ENCODE measurements at regions of chr2 and their contacts with region 1.

Region 1: DNA sequence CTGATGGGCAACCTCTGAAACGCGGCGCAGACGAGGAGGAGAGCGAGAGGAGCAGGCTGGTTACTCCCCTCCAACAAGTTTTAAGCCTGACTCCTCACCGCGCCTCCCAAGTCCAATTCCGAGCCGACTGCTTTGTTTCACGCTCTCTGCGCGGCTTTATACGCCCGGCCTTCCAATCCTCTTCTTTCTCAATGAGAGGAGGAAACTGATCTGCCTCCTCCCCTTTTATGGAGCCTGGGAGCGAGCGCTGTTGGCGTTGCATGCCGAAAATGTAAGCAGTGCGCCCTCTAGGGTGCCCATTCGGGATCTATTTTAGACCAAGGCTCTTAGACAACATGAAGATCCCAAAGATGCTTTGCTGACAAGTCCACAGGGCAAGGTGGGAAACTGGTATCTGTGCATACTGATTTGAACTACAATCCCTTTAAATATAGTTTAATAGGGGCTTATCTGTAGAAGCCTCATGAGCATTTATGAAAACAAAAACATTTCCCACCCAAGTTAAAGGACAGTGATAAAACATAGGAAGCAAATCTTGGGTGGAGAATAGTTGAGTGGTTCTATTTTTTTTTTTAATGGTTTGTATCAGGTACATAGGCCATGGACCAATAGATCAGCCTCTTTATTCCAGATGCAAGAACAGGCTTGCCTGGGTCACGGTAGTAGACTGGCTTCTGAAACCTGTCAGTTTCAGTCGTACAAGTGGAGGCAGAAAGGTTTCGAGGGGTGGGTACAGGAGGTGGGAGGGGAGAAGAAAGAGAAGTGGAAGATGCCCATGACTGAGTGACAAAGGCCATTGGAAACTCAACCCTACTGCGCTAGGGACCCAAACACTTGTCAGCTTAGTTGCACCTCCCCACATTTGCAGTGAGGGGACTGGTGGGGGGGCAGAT is at the start of gene RND3:
- DNase-seq: peak; percentile 96
- H3K4me3 Mint-ChIP-seq: peak within 1 kb of the TSS; percentile 94
- H3K27ac Mint-ChIP-seq: peak within 1 kb of the TSS; percentile 99
- H3K4me1 Mint-ChIP-seq: peaks cover 18% of the 10 kb centered on the region
- H3K27me3 Mint-ChIP-seq: peaks cover 8% of the 10 kb centered on the region
- CTCF ChIP-seq: peak; percentile 67
- total RNA-seq, gene RND3: 118 and 143 TPM in 2 replicates

Region 2: GRCh38 chr2:149808556-149808955 is 679.2 kb before region 1 on chr2:
- CTCF ChIA-PET with region 1: no interaction called
- intact Hi-C with region 1: no loop called
- DNase-seq: no peak
- H3K4me3 Mint-ChIP-seq: no peak overlapping the region
- H3K27ac Mint-ChIP-seq: no peak overlapping the region
- H3K4me1 Mint-ChIP-seq: no peaks in the 10 kb centered on the region
- H3K27me3 Mint-ChIP-seq: no peaks in the 10 kb centered on the region
- CTCF ChIP-seq: no peak

Region 3: DNA sequence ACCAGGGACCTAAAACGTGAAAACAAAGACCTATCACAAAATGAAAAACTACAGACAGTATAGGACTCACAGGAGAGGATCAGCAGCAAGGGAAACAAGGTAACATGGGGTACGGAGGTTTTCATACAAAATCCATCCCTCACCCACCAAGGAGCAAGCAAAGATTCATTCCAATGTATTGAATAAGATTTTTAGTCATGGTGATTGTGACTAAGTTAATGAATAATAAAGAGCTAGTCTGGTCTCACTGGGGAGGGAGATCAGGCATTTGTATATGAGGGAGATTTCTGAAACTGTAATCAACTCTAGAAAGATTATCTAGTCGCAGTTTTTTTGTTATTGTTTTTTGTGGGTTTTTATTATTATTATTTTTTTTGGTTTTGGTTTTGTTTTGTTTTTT is 563.8 kb before region 1 on chr2:
- CTCF ChIA-PET with region 1: no interaction called
- intact Hi-C with region 1: loop called (anchors 5 kb)
- DNase-seq: no peak
- H3K4me3 Mint-ChIP-seq: peak overlapping the region; percentile 10
- H3K27ac Mint-ChIP-seq: peak overlapping the region; percentile 63
- H3K4me1 Mint-ChIP-seq: peaks cover 18% of the 10 kb centered on the region
- H3K27me3 Mint-ChIP-seq: no peaks in the 10 kb centered on the region
- CTCF ChIP-seq: no peak

Region 4: GRCh38 chr2:150513647-150514046 is 25.9 kb after region 1 on chr2:
- CTCF ChIA-PET with region 1: no interaction called
- intact Hi-C with region 1: loop called (anchors 2 kb)
- DNase-seq: no peak
- H3K4me3 Mint-ChIP-seq: no peak overlapping the region
- H3K27ac Mint-ChIP-seq: no peak overlapping the region
- H3K4me1 Mint-ChIP-seq: peaks cover 11% of the 10 kb centered on the region
- H3K27me3 Mint-ChIP-seq: no peaks in the 10 kb centered on the region
- CTCF ChIP-seq: no peak

Region 5: GRCh38 chr2:150610671-150611279 is 123.0 kb after region 1 on chr2:
- CTCF ChIA-PET with region 1: interaction called, 4 read pairs
- intact Hi-C with region 1: loop called (anchors 1 kb)
- DNase-seq: peak; percentile 64
- H3K4me3 Mint-ChIP-seq: no peak overlapping the region
- H3K27ac Mint-ChIP-seq: no peak overlapping the region
- H3K4me1 Mint-ChIP-seq: peaks cover 23% of the 10 kb centered on the region
- H3K27me3 Mint-ChIP-seq: no peaks in the 10 kb centered on the region
- CTCF ChIP-seq: peak; percentile 66

Measured in Calu3 (cell line).